ENCODE measurements at regions of chr3 and their contacts with region 1.

Region 1: DNA sequence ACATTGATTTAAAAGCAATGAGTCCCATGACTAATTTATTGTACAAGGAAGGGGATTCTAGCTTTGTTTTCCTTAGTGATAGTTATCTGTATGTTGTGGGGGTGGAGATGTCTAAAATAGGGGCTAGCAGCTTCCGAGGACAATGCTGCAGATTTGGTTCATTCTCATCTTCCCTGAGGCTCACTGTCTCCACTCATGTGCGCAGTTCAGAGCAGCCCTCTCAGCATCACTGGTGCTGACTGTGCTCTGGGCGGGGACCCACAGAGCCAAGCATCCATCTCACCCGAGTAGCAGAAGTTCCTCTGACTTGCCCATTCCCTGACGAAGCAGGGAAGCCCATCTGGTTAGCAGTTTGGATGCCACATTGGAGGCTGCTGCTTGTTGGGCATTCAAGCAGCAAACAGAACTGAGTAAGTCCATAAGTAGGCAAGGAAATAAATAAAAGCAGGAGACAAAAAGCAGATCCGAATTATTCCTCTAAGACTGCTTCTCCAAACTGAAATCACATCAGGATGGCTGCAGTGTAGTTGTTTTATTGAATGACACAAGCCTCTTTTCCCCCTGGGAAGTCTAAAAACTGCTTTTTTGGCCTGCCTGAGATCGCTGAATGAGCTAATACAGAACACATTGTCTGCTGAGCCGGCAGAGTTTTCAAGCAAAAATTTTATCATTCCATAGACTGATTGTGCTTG is 27.5 kb downstream of the RARB start:
- DNase-seq: peak; percentile 46
- H3K4me3 ChIP-seq: no peak overlapping the region
- H3K27ac ChIP-seq: peak overlapping the region; percentile 85
- H3K4me1 ChIP-seq: peaks cover 45% of the 10 kb centered on the region
- H3K27me3 ChIP-seq: no peaks in the 10 kb centered on the region
- CTCF ChIP-seq: no peak

Region 2: DNA sequence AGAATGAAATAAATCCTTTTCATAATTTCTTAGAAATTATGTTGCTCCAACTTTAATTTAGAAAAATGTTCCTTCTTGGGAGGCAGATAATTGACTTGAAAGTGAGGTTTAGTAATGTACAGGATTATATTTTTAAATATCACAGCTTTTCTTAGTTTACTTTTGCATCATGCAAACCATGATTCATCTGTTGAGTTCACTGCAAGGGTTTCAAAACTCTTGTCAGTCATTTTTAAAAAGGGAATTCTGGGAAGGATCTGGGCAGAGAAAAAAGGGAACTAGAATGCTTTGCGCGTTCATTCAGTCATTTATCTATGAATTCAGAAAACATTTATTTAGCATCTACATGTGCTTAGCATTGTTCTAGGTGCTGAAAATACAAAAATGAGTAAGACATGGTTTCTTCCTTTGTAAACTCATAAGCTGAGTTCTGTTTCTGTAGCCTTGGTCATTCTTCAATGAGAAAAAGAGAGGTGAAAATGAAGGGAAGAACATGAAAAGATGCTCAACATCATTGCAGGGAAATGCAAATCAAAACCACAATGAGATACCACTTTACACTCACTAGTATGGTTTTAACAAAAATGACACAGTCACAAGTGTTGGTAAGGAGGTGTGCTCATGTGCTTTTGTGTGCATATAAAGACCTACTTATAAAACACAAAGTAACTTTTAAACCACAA is 1301.4 kb before region 1 on chr3:
- CTCF ChIA-PET with region 1: no interaction called
- POLR2A ChIA-PET with region 1: no interaction called
- intact Hi-C with region 1: no loop called
- DNase-seq: no peak
- H3K4me3 ChIP-seq: no peak overlapping the region
- H3K27ac ChIP-seq: no peak overlapping the region
- H3K4me1 ChIP-seq: no peaks in the 10 kb centered on the region
- H3K27me3 ChIP-seq: no peaks in the 10 kb centered on the region
- CTCF ChIP-seq: no peak

Region 3: GRCh38 chr3:25438791-25439555 is 16.6 kb before region 1 on chr3:
- CTCF ChIA-PET with region 1: no interaction called
- POLR2A ChIA-PET with region 1: interaction called, 10 read pairs
- intact Hi-C with region 1: no loop called
- DNase-seq: no peak
- H3K4me3 ChIP-seq: no peak overlapping the region
- H3K27ac ChIP-seq: no peak overlapping the region
- H3K4me1 ChIP-seq: no peaks in the 10 kb centered on the region
- H3K27me3 ChIP-seq: no peaks in the 10 kb centered on the region
- CTCF ChIP-seq: no peak

Region 4: DNA sequence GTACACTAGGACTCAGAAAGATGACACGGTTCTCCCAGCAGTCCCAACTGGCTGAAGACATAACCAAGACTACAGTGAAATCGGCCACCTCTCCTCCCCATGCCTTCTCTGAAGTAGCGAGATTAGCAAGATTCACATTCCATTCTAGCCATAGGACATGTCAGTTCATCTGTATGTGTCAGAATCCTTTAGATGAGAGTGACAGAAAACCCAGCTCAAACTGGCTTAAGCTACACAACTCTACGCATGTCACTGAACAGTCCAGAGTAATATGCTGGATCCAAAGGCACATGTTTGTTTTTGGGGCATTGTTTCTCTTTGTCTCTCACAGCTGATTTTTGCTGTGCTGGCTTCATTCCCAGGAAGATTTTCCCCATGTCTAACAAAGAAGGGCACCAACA is 48.3 kb after region 1 on chr3:
- CTCF ChIA-PET with region 1: interaction called, 4 read pairs
- POLR2A ChIA-PET with region 1: no interaction called
- intact Hi-C with region 1: loop called (anchors 2 kb)
- DNase-seq: peak; percentile 64
- H3K4me3 ChIP-seq: peak overlapping the region; percentile 16
- H3K27ac ChIP-seq: peak overlapping the region; percentile 46
- H3K4me1 ChIP-seq: peaks cover 30% of the 10 kb centered on the region
- H3K27me3 ChIP-seq: no peaks in the 10 kb centered on the region
- CTCF ChIP-seq: no peak

Region 5: GRCh38 chr3:25573386-25574171 is 118.0 kb after region 1 on chr3:
- CTCF ChIA-PET with region 1: no interaction called
- POLR2A ChIA-PET with region 1: no interaction called
- intact Hi-C with region 1: loop called (anchors 10 kb)
- DNase-seq: peak; percentile 81
- H3K4me3 ChIP-seq: no peak overlapping the region
- H3K27ac ChIP-seq: peak overlapping the region; percentile 0
- H3K4me1 ChIP-seq: peaks cover 6% of the 10 kb centered on the region
- H3K27me3 ChIP-seq: no peaks in the 10 kb centered on the region
- CTCF ChIP-seq: no peak